AG04450 (cell line): ENCODE measurements at regions of chr12 and their contacts with region 1.

Region 1: GRCh38 chr12:48165094-48165981 is 8.0 kb upstream of the ASB8 start:
- DNase-seq: peak; percentile 30
- H3K4me3 ChIP-seq: no peak overlapping the region
- H3K27ac ChIP-seq: no peak overlapping the region
- H3K27me3 ChIP-seq: no peaks in the 10 kb centered on the region
- CTCF ChIP-seq: peak; percentile 98

Region 2: DNA sequence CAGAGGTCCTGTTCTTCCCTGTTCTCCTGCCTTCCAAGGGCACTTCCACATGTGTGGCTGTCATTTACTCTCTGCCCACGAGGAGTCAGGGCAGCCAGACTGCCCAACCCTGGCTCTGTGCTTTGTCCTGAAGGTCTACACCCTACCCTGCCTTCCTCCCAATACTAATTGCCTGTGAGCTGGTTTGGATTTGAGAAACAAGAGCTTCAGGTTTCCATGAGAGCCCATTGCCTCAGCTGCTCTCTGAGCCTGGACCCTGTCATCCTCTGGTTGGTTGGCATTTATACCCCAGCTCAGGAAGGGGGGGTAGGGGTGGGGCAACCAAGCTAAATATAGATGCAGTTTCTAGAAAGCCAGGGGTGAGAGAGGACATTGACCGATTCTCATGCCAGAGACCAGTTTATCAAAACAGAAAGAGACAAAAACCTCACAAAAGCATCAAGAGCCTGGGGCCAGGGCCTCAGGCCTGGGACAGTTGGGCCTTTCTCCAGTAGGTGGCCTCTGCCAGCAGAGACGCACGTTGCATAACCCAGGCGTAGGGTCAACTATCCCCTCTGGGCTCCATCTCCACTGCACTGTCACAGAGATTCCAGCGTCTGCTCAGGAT is 295.1 kb before region 1 on chr12:
- CTCF ChIA-PET with region 1: no interaction called
- POLR2A ChIA-PET with region 1: no interaction called
- DNase-seq: no peak
- H3K4me3 ChIP-seq: no peak overlapping the region
- H3K27ac ChIP-seq: no peak overlapping the region
- H3K27me3 ChIP-seq: no peaks in the 10 kb centered on the region
- CTCF ChIP-seq: peak; percentile 41

Region 3: DNA sequence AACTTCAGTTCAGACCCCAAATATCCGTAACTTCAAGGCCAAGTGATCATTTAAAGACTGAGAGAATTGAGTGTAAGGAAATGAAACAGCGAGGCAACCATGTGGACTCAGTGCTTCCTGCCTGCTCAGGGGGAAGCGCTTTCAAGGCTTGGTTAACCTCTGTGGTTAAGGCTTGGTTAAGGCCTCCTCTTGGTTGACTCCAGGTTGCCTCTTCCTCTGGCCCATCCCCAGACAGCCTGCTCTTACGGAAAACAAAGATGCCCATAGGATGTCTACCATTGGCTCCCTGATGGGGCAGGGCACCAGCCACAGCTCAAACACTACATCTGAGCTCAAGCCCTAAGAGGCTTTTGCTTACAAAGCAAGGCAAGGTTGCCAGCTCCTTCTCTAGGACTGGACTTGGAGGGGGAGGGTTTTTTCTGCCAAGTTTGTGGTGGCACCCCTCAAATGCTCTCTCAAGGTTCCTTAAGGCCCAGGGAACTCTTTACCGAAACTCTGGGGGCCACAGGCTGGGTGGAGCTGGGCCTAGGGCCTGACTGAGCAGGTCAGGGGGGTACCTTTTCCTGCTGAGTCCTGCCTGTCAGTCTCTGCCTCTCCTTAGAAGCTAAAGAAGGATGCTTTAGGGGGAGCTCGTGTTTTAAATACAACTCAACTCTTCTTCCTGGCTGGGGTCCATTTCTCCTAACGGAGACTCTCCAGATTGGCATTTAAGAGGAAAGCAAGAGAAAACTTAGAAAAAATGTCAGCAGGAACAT is 174.8 kb before region 1 on chr12:
- CTCF ChIA-PET with region 1: interaction called, 14 read pairs
- POLR2A ChIA-PET with region 1: no interaction called
- DNase-seq: no peak
- H3K4me3 ChIP-seq: no peak overlapping the region
- H3K27ac ChIP-seq: no peak overlapping the region
- H3K27me3 ChIP-seq: peaks cover 40% of the 10 kb centered on the region
- CTCF ChIP-seq: peak; percentile 13; the same call in 1 of the 2 replicates

Region 4: GRCh38 chr12:48084066-48084465 is 81.3 kb before region 1 on chr12:
- CTCF ChIA-PET with region 1: interaction called, 24 read pairs
- POLR2A ChIA-PET with region 1: no interaction called
- DNase-seq: no peak
- H3K4me3 ChIP-seq: no peak overlapping the region
- H3K27ac ChIP-seq: no peak overlapping the region
- H3K27me3 ChIP-seq: no peaks in the 10 kb centered on the region
- CTCF ChIP-seq: peak; percentile 39

Region 5: GRCh38 chr12:48175613-48176416 is 10.5 kb after region 1 on chr12:
- CTCF ChIA-PET with region 1: interaction called, 13 read pairs
- POLR2A ChIA-PET with region 1: no interaction called
- DNase-seq: no peak
- H3K4me3 ChIP-seq: no peak overlapping the region
- H3K27ac ChIP-seq: no peak overlapping the region
- H3K27me3 ChIP-seq: peaks cover 33% of the 10 kb centered on the region
- CTCF ChIP-seq: no peak